Activated CD4-positive, alpha-beta T cell treated with anti-CD3 and anti-CD28 coated beads, Interleukin-2, amount 10 ng/mL, durations not matched to agents 24 days and 14 days (primary cell): ENCODE measurements at regions of chr12 and their contacts with region 1.

Region 1: DNA sequence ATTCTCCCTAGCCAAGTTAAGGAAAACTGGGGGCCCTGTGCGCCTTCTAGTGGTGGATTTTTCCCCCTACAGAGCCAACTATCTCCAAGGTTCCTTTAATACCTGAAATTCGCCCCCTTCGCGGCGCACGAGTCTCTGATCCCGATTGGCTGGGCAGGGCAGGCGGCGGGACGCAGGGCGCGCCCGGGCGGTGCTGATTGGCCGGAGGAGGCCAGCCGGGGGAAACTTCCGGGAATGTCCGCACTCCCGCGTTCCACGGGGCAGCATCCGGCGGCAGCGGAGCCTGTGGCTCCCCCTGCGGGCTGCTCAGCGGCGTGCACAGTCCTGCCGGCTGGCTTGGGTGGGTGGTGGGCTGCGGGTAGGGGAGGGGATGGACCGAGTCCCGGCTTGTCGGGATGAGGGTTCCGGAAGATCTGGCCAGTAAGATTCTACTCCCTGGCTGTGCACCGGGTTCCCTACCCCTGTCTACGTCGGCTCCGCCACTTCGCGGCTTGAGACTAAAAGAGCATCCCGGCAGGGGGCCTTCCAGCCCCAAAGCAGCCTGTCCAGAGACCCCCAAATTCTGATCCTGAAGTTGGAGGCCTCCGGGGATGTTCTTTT is at the start of gene NABP2:
- DNase-seq: peak; percentile 99
- H3K4me3 Mint-ChIP-seq: peak within 1 kb of the TSS; percentile 100
- H3K27ac Mint-ChIP-seq: peak within 1 kb of the TSS; percentile 85
- H3K4me1 Mint-ChIP-seq: peaks cover 39% of the 10 kb centered on the region
- H3K27me3 Mint-ChIP-seq: no peaks in the 10 kb centered on the region
- total RNA-seq, gene NABP2: 94.7 and 96.0 TPM in 2 replicates

Region 2: GRCh38 chr12:55817346-55818139 is 406.7 kb before region 1 on chr12 and contains the starts of genes ORMDL2 and SARNP:
- intact Hi-C with region 1: loop called (anchors 5 kb)
- DNase-seq: peak; percentile 99
- H3K4me3 Mint-ChIP-seq: no peak within 1 kb of the TSS
- H3K27ac Mint-ChIP-seq: peak within 1 kb of the TSS; percentile 39
- H3K4me1 Mint-ChIP-seq: peaks cover 23% of the 10 kb centered on the region
- H3K27me3 Mint-ChIP-seq: no peaks in the 10 kb centered on the region
- total RNA-seq, gene ORMDL2: 49.8 and 55.8 TPM in 2 replicates
- total RNA-seq, gene SARNP: 76.6 and 81.6 TPM in 2 replicates

Region 3: GRCh38 chr12:56152318-56153033 is 71.7 kb before region 1 on chr12 and contains the start of gene MYL6B:
- intact Hi-C with region 1: loop called (anchors 2 kb)
- DNase-seq: peak; percentile 98
- H3K4me3 Mint-ChIP-seq: peak within 1 kb of the TSS; percentile 88
- H3K27ac Mint-ChIP-seq: peak within 1 kb of the TSS; percentile 98
- H3K4me1 Mint-ChIP-seq: peaks cover 39% of the 10 kb centered on the region
- H3K27me3 Mint-ChIP-seq: no peaks in the 10 kb centered on the region
- total RNA-seq, gene MYL6B: 63.3 and 68.9 TPM in 2 replicates

Region 4: DNA sequence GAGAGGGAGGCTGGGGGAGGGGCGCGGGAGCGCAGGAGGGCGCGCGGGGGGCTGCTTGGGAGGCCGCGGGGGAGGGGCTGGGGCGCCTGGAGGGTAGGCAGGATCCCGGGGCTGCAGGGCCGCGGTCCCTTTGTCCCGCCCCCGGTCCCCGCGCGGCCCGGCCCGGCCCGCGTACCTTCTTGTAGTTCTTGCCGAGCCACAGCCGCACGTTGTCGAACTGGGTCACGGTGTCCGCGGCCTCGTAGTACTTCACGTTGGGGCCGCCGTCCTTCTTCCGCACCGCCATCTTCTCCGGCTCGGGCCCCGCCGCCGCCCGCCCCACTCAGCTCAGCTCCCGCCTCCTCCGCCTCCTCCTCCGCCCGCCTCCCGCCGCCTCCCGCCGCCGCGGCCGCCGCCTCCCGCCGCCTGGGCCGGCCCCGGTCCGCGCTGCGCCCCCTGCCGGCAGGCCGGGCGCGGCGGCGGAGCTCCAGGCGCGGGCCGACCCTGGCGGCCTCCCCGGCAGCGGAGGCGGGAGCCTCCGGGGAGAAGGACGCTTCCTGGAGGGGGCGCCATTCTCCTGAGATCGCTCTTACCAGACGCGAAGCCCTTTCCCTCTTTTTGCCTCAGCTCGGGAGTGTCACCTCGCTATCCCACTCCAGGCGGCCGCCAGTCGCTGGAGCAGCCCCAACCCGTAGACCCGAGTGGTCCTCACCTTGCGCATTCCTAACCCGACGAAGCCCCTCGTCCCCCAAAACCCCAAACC is 34.9 kb before region 1 on chr12 and contains the start of gene SMARCC2:
- intact Hi-C with region 1: loop called (anchors 1 kb)
- DNase-seq: peak; percentile 96
- H3K4me3 Mint-ChIP-seq: peak within 1 kb of the TSS; percentile 97
- H3K27ac Mint-ChIP-seq: peak within 1 kb of the TSS; percentile 95
- H3K4me1 Mint-ChIP-seq: peaks cover 42% of the 10 kb centered on the region
- H3K27me3 Mint-ChIP-seq: no peaks in the 10 kb centered on the region
- total RNA-seq, gene SMARCC2: 127 and 130 TPM in 2 replicates

Region 5: DNA sequence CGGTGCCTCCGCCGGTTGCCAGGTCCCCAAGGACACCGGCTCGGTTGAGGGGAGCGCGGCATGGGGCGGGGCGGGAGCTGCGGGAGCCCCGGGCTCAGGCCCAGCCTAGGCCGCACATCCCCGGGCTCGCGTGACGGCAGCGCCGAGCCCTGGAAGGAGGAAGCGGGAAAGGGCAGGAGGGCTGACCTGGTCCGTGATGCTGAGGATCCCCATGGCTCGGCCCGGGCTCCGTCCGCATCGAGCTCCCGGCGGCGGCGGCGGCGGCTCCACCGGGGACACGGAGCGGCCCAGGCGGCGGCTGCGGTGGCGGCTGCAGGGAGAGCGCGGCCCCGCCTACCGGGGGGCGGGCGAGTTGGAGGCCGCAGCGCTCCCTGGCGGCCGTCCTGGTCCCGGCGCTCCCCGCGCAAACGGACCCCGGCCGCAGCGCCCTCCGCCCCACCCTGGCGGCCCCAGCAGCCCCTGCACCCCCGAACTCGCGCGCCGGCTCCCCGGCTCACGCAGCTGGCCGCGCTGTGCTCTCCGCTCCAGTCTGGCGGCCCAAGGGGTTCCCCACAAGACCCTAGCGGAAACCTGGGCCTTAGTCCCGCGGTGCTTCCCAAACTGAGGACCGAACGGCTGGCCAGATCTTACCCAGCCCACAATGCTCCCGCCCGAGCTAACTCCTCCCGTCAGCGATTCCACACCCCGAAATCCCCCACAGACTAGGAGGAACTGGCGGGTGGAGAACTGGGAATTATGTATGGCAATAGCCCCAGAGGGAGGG is 34.0 kb after region 1 on chr12 and contains the start of gene ANKRD52:
- intact Hi-C with region 1: loop called (anchors 1 kb)
- DNase-seq: peak; percentile 96
- H3K4me3 Mint-ChIP-seq: peak within 1 kb of the TSS; percentile 96
- H3K27ac Mint-ChIP-seq: peak within 1 kb of the TSS; percentile 84
- H3K4me1 Mint-ChIP-seq: peaks cover 17% of the 10 kb centered on the region
- H3K27me3 Mint-ChIP-seq: no peaks in the 10 kb centered on the region
- total RNA-seq, gene ANKRD52: 68.0 and 69.0 TPM in 2 replicates

Region 6: DNA sequence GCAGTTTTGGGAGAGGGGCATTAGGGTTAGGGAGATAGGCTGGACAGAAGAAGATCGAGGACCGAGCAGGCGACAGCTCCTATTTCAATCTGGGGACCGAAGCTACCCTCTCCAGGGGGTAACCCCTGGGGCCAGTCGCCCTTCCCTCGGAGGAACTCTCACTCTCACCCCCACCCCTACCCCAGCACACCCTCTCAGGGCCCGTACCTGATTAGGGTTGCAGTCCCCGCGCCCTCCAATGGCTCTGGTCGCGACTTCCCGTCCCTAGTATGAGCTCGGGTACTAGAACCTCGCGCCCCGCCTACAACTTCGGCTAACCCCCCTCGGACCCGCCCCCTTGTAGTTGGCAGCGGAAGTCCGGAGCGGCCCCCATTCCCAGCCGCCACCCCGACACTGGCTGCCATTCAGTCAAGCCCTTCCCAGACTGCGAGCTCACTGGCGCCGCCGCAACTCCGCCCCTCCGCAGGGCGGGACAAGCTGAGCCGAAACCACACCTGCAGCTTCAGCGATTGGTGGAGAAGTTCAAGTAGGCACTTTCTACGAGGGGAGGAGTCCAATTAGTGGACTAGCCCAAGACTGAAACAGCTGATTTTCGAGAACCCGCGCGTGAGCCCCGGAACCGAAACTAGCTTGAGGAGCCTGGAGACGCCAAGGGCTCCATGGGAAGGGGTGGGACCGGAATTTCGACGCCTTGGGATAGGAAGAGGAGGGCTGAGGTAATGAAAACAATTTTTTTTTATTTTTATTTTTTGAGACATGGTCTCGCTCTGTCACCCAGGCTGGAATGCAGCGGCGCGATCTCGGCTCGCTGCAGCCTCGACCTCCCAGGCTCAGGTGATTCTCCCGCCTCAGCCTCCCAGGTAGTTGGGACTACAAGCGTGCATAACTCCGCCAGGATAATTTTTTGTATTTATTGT is 135.9 kb after region 1 on chr12 and contains the start of gene STAT2:
- intact Hi-C with region 1: loop called (anchors 1 kb)
- DNase-seq: peak; percentile 100
- H3K4me3 Mint-ChIP-seq: peak within 1 kb of the TSS; percentile 94
- H3K27ac Mint-ChIP-seq: peak within 1 kb of the TSS; percentile 95
- H3K4me1 Mint-ChIP-seq: peaks cover 31% of the 10 kb centered on the region
- H3K27me3 Mint-ChIP-seq: no peaks in the 10 kb centered on the region
- total RNA-seq, gene STAT2: 64.9 and 68.4 TPM in 2 replicates